GM10248 (cell line): ENCODE measurements at regions of chr13 and their contacts with region 1.

Region 1: DNA sequence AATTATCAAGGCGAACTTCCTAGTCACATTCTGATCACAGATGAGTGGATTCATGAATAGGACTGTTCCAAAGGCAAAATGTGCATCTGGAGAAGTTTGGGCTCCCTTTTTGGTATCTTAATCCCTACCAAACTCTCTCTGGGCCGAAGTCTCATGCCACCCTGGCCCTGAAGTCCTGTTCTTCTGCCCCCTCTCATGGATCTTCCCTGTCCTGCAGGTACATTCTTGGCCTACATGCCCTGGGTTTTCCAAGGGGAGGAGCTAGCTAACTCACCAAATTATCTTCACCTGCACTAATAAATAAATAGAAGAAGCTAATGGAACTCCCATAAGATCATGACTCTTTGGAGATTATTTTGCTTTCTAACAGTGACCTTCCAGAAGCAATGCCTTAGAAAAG is 50.3 kb downstream of the SERTM1 start:
- DNase-seq: no peak
- CTCF ChIP-seq: no peak

Region 2: GRCh38 chr13:36746051-36746450 is 21.9 kb after region 1 on chr13:
- CTCF ChIA-PET with region 1: interaction called, 15 read pairs
- POLR2A ChIA-PET with region 1: no interaction called
- DNase-seq: no peak
- CTCF ChIP-seq: no peak